Activated naive CD4-positive, alpha-beta T cell treated with anti-CD3 and anti-CD28 coated beads, Interleukin-2, amount 10 ng/mL, durations not matched to agents 7 days and 5 days (primary cell): ENCODE measurements at regions of chr7 and their contacts with region 1.

Region 1: DNA sequence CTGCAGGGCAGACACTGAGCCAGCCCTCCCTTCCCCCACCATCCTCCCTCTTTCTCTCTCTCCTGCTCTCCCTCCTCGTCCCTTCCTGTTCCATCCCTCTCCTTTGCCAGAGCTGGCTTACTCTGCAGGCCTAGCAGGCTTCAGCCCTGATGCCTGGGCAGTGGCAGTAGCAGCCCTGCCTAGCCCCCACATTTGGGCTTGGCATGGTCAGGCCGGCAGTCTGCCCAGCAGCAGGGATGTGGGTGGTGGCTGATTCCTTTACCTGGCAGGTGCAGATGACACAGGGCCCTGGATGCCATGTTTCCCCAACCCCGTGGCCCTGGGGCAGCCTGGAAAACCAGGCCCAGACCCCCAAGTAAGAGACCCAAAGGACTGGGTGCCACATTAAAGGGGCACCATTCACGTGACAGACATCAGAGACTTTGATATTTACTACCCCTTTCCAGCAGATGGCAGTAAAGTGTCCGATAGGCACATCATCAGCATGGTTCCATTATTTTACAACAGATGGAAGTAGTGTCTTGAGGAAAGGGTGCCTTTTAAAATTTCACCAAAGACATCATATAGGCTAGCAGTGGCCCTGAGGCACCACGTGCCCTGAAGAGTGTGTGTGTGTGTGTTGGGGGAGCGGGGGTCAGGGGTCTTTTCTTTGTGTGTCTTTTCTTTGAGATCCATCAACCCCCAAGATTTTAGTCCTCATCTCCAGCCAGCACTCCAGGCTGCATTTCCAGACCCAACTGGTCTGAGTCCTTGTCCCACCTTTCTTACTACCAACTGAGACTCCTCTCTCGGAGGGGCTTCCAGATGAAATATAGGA is 5.9 kb downstream of the KCP start:
- DNase-seq: peak; percentile 30
- H3K4me3 Mint-ChIP-seq: no peak overlapping the region
- H3K27ac Mint-ChIP-seq: no peak overlapping the region
- H3K4me1 Mint-ChIP-seq: no peaks in the 10 kb centered on the region
- H3K27me3 Mint-ChIP-seq: peaks cover 55% of the 10 kb centered on the region

Region 2: GRCh38 chr7:129091484-129092002 is 187.0 kb after region 1 on chr7:
- CTCF ChIA-PET with region 1: interaction called, 25 read pairs
- DNase-seq: peak; percentile 92
- H3K4me3 Mint-ChIP-seq: no peak overlapping the region
- H3K27ac Mint-ChIP-seq: no peak overlapping the region
- H3K4me1 Mint-ChIP-seq: peaks cover 37% of the 10 kb centered on the region
- H3K27me3 Mint-ChIP-seq: peaks cover 12% of the 10 kb centered on the region